ENCODE measurements at regions of chr14 and their contacts with region 1.

Region 1: DNA sequence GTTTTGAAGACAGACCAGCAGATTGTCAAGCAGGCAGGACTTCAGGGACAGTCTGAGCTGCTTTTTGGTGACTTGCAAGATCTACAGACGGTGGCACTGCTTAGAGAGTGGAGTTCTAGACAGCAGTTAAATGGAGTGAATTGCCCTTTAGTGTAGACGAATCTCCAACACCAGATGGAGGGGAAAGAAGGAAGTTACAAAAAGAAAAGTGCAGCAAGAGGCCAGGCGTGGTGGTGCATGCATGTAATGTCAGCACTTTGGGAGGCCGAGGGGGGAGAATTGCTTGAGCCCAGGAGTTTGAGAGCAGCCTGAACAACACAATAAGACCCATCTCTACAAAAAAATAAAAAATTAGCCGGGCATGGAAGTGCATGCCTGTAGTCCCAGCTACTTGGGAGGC is 8.4 kb upstream of the HHIPL1 start:
- DNase-seq: no peak
- CTCF ChIP-seq: no peak

Region 2: GRCh38 chr14:99537399-99537798 is 99.1 kb before region 1 on chr14:
- in situ Hi-C with region 1: loop called (anchors 10 kb)
- DNase-seq: no peak
- CTCF ChIP-seq: no peak

Measured in GM13977 (cell line).